Activated B cell treated with CpG ODN at 0.5 μM for 24 hours (primary cell): ENCODE measurements at regions of chr7 and their contacts with region 1.

Region 1: DNA sequence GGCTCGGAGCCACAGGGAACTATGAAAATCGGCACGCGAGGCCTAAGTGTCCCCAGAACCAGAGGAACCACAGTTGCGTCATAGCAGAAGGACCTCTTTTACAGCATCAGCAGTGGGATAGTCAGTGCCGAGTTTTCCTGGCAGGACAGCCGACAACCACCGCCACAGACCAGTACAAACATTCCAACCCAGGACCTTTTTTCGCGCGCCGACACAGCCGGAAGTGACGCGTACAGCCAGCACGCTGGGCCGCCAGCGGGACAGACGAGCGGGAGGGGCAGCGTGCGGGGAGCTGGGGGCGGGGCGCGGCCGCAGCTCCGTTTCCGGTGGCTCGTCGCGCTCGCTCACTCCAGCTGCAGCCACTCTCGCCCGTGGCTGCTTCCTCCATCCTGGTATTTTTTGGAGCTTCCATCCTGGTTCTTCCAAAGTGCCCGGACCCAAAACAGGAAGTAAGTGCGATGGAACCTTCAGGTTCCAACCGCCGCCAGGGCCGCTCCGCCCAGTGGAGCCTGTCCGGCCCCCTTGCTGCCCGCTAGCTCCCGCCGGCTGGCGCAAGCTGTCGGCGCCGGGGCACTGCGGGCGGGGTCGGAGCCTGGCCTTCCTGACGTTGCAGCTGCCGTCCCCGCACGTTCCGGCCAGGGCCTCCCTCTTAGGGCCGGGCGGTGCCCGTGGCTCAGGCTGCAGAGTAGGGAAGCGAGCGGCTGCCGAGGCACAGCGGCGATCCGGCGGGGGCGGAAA is at the start of gene DMTF1:
- DNase-seq: peak; percentile 81
- ATAC-seq: peak; percentile 85
- H3K4me3 Mint-ChIP-seq: peak within 1 kb of the TSS; percentile 99
- H3K27ac Mint-ChIP-seq: peak within 1 kb of the TSS; percentile 99
- H3K4me1 Mint-ChIP-seq: peaks cover 49% of the 10 kb centered on the region
- H3K27me3 Mint-ChIP-seq: no peaks in the 10 kb centered on the region
- CTCF ChIP-seq: no peak
- total RNA-seq, gene DMTF1: 159 and 175 TPM in 2 replicates

Region 2: GRCh38 chr7:86243157-86243556 is 909.1 kb before region 1 on chr7:
- CTCF ChIA-PET with region 1: no interaction called
- POLR2A ChIA-PET with region 1: no interaction called
- intact Hi-C with region 1: no loop called
- DNase-seq: no peak
- ATAC-seq: no peak
- H3K4me3 Mint-ChIP-seq: no peak overlapping the region
- H3K27ac Mint-ChIP-seq: no peak overlapping the region
- H3K4me1 Mint-ChIP-seq: no peaks in the 10 kb centered on the region
- H3K27me3 Mint-ChIP-seq: no peaks in the 10 kb centered on the region
- CTCF ChIP-seq: no peak

Region 3: DNA sequence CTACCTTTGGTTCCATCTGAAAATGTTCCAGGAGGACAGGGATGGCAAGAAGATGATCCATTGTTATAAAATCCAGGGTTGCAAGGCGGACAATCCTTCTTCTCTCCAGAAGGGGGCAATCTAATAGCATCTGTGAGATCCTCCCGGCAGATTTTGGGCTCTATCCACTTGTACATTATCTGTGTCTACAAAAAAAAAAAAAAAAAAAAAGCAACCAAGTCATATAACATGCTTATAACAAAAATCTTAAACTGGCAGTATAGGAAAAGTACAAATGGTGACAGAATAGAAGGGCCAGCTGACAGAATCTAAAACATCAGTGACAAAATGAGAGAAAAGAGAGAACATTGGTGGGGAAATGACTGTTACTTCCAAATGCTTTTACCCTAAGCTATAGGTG is 225.5 kb before region 1 on chr7:
- CTCF ChIA-PET with region 1: interaction called, 33 read pairs
- POLR2A ChIA-PET with region 1: interaction called, 3 read pairs
- intact Hi-C with region 1: loop called (anchors 1 kb)
- DNase-seq: no peak
- ATAC-seq: peak; percentile 52
- H3K4me3 Mint-ChIP-seq: no peak overlapping the region
- H3K27ac Mint-ChIP-seq: no peak overlapping the region
- H3K4me1 Mint-ChIP-seq: peaks cover 7% of the 10 kb centered on the region
- H3K27me3 Mint-ChIP-seq: no peaks in the 10 kb centered on the region
- CTCF ChIP-seq: peak; percentile 49

Region 4: GRCh38 chr7:87059525-87060287 is 92.6 kb before region 1 on chr7 and contains the start of gene ELAPOR2:
- CTCF ChIA-PET with region 1: interaction called, 3 read pairs
- POLR2A ChIA-PET with region 1: interaction called, 14 read pairs
- intact Hi-C with region 1: loop called (anchors 1 kb)
- DNase-seq: peak; percentile 94
- ATAC-seq: peak; percentile 96
- H3K4me3 Mint-ChIP-seq: peak within 1 kb of the TSS; percentile 88
- H3K27ac Mint-ChIP-seq: peak within 1 kb of the TSS; percentile 77
- H3K4me1 Mint-ChIP-seq: peaks cover 14% of the 10 kb centered on the region
- H3K27me3 Mint-ChIP-seq: no peaks in the 10 kb centered on the region
- CTCF ChIP-seq: no peak
- total RNA-seq, gene ELAPOR2: 4.5 and 5.1 TPM in 2 replicates

Region 5: GRCh38 chr7:87231256-87231655 is 79.0 kb after region 1 on chr7:
- CTCF ChIA-PET with region 1: interaction called, 6 read pairs
- POLR2A ChIA-PET with region 1: no interaction called
- intact Hi-C with region 1: loop called (anchors 5 kb)
- DNase-seq: no peak
- ATAC-seq: no peak
- H3K4me3 Mint-ChIP-seq: no peak overlapping the region
- H3K27ac Mint-ChIP-seq: no peak overlapping the region
- H3K4me1 Mint-ChIP-seq: peaks cover 8% of the 10 kb centered on the region
- H3K27me3 Mint-ChIP-seq: no peaks in the 10 kb centered on the region
- CTCF ChIP-seq: no peak

Region 6: DNA sequence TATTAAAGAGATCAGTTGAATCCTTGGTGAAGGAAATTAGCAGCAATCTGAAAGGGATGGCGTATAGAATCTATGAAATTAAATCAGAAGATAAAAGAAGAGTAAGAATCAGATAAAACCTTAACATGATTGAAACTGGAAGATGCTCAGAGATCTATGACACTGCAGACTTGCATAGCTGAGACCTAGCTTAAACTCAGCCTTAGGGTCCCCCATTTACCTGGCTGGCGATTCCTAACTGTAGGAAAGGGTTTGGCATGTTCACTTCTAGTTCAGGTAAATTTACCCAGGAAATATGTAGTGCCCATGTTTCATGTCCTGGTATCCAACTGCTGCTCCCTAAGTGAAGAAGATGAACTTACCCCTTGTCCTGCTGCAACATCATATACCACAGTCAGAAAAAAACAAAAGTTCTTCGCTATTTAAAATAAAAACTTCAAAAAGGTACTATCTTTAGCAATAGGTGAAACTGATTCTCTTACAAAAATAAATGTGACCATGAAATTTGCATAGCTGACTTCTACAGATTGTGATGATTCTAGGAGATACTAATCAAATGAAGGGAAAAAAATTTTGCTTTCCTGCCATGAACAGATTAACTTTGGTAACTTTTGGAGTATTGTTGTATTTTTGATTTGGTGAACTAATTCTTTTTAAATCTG is 115.1 kb after region 1 on chr7:
- CTCF ChIA-PET with region 1: no interaction called
- POLR2A ChIA-PET with region 1: no interaction called
- intact Hi-C with region 1: no loop called
- DNase-seq: no peak
- ATAC-seq: no peak
- H3K4me3 Mint-ChIP-seq: no peak overlapping the region
- H3K27ac Mint-ChIP-seq: no peak overlapping the region
- H3K4me1 Mint-ChIP-seq: peaks cover 14% of the 10 kb centered on the region
- H3K27me3 Mint-ChIP-seq: peaks cover 33% of the 10 kb centered on the region
- CTCF ChIP-seq: no peak

Region 7: GRCh38 chr7:87474533-87475358 is 322.5 kb after region 1 on chr7:
- CTCF ChIA-PET with region 1: no interaction called
- POLR2A ChIA-PET with region 1: no interaction called
- intact Hi-C with region 1: loop called (anchors 1 kb)
- DNase-seq: peak; percentile 37
- ATAC-seq: peak; percentile 76
- H3K4me3 Mint-ChIP-seq: peak overlapping the region; percentile 89
- H3K27ac Mint-ChIP-seq: peak overlapping the region; percentile 96
- H3K4me1 Mint-ChIP-seq: peaks cover 44% of the 10 kb centered on the region
- H3K27me3 Mint-ChIP-seq: no peaks in the 10 kb centered on the region
- CTCF ChIP-seq: no peak

Region 8: DNA sequence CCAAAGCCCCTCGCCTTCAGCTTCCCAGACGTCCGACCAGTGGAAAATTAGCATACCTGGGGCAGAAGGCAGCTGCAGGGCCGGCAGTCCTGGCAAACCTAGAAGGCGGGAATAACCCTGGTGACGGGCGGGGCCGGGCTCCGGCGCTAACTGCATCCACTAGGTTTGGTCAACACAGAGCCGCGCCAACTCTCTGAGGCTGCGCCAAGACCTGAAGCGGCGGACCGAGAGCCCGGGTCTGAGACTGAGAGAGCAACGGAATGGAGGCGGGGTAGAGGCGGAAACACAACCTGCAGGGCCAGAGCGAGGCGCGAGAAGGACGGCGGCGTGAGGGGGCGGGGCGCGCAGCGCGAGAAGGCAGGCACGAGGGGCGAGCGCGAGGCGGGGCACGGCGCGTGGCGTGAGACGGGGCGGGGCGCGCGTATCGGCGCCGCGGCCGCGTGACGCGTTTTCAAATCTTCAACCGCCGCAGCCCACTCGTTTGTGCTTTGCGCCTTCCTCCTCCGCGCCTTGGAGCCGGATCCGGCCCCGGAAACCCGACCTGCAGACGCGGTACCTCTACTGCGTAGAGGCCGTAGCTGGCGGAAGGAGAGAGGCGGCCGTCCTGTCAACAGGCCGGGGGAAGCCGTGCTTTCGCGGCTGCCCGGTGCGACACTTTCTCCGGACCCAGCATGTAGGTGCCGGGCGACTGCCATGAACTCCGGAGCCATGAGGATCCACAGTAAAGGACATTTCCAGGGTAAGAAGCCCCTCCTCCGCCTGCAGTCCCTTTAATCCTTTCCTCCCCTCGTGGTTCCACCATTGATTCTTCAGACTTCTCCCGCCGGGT is 724.0 kb after region 1 on chr7 and contains the starts of genes DBF4 and SLC25A40:
- CTCF ChIA-PET with region 1: no interaction called
- POLR2A ChIA-PET with region 1: interaction called, 7 read pairs
- intact Hi-C with region 1: loop called (anchors 1 kb)
- DNase-seq: peak; percentile 98
- ATAC-seq: peak; percentile 91
- H3K4me3 Mint-ChIP-seq: peak within 1 kb of the TSS; percentile 95
- H3K27ac Mint-ChIP-seq: peak within 1 kb of the TSS; percentile 96
- H3K4me1 Mint-ChIP-seq: peaks cover 43% of the 10 kb centered on the region
- H3K27me3 Mint-ChIP-seq: no peaks in the 10 kb centered on the region
- CTCF ChIP-seq: no peak
- total RNA-seq, gene DBF4: 20.2 and 30.3 TPM in 2 replicates
- total RNA-seq, gene SLC25A40: 16.6 and 21.7 TPM in 2 replicates